Activated CD4-positive, alpha-beta T cell treated with anti-CD3 and anti-CD28 coated beads for 36 hours (primary cell): ENCODE measurements at regions of chr3 and their contacts with region 1.

Region 1: DNA sequence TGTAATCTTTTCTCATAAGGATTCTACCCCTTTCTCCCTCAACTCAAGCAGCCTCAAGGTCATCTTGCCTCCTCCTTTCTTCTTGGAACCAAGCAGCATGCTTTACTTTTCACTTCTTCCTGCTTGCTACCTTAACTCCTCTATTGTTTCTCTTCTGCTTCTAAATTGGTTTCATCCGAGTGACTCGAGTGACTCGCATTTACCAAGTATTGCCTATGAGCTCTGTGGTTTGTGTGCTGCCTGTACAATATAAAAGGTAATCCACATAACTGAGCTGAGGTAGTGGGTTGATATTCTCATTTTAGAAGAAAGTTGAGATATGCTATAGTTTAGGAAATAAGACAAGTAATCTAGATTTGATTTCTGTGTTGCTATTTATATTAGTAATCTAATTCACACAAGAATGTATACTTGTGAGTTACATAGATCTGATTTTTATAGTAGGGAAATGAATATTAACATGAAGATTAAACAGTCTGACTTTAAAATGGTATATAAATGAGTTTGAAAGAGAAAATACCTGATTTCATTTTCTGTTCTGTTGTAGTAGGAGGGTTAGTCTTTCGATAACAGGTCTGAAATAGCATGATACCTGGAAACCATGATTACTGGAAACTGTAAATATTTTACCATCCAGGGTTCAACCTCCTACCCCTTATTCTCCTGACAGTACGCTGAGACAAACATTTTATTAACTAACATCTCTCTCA is 5.5 kb downstream of the HHLA2 start:
- DNase-seq: peak; percentile 33
- ATAC-seq: peak; percentile 86
- H3K4me3 Mint-ChIP-seq: peak overlapping the region; percentile 45
- H3K27ac Mint-ChIP-seq: peak overlapping the region; percentile 83
- H3K4me1 Mint-ChIP-seq: peaks cover 43% of the 10 kb centered on the region
- H3K27me3 Mint-ChIP-seq: peaks cover 2% of the 10 kb centered on the region

Region 2: GRCh38 chr3:108124337-108125152 is 177.3 kb before region 1 on chr3:
- CTCF ChIA-PET with region 1: no interaction called
- POLR2A ChIA-PET with region 1: no interaction called
- intact Hi-C with region 1: loop called in 1 of 2 experiments (anchors 5 kb)
- DNase-seq: peak; percentile 82
- ATAC-seq: peak; percentile 70
- H3K4me3 Mint-ChIP-seq: peak overlapping the region; percentile 93
- H3K27ac Mint-ChIP-seq: peak overlapping the region; percentile 96
- H3K4me1 Mint-ChIP-seq: peaks cover 62% of the 10 kb centered on the region
- H3K27me3 Mint-ChIP-seq: no peaks in the 10 kb centered on the region

Region 3: GRCh38 chr3:108342837-108343478 is 41.1 kb after region 1 on chr3:
- CTCF ChIA-PET with region 1: interaction called, 3 read pairs
- POLR2A ChIA-PET with region 1: no interaction called
- intact Hi-C with region 1: loop called in 1 of 2 experiments (anchors 5 kb)
- DNase-seq: no peak
- ATAC-seq: peak; percentile 92
- H3K4me3 Mint-ChIP-seq: no peak overlapping the region
- H3K27ac Mint-ChIP-seq: peak overlapping the region; percentile 5
- H3K4me1 Mint-ChIP-seq: peaks cover 17% of the 10 kb centered on the region
- H3K27me3 Mint-ChIP-seq: peaks cover 5% of the 10 kb centered on the region

Region 4: GRCh38 chr3:108388136-108389132 is 86.6 kb after region 1 on chr3:
- CTCF ChIA-PET with region 1: no interaction called
- POLR2A ChIA-PET with region 1: no interaction called
- intact Hi-C with region 1: loop called in 1 of 2 experiments (anchors 2 kb)
- DNase-seq: peak; percentile 29
- ATAC-seq: peak; percentile 90
- H3K4me3 Mint-ChIP-seq: no peak overlapping the region
- H3K27ac Mint-ChIP-seq: peak overlapping the region; percentile 8
- H3K4me1 Mint-ChIP-seq: peaks cover 25% of the 10 kb centered on the region
- H3K27me3 Mint-ChIP-seq: peaks cover 15% of the 10 kb centered on the region